ENCODE measurements at regions of chr19 and their contacts with region 1.

Region 1: DNA sequence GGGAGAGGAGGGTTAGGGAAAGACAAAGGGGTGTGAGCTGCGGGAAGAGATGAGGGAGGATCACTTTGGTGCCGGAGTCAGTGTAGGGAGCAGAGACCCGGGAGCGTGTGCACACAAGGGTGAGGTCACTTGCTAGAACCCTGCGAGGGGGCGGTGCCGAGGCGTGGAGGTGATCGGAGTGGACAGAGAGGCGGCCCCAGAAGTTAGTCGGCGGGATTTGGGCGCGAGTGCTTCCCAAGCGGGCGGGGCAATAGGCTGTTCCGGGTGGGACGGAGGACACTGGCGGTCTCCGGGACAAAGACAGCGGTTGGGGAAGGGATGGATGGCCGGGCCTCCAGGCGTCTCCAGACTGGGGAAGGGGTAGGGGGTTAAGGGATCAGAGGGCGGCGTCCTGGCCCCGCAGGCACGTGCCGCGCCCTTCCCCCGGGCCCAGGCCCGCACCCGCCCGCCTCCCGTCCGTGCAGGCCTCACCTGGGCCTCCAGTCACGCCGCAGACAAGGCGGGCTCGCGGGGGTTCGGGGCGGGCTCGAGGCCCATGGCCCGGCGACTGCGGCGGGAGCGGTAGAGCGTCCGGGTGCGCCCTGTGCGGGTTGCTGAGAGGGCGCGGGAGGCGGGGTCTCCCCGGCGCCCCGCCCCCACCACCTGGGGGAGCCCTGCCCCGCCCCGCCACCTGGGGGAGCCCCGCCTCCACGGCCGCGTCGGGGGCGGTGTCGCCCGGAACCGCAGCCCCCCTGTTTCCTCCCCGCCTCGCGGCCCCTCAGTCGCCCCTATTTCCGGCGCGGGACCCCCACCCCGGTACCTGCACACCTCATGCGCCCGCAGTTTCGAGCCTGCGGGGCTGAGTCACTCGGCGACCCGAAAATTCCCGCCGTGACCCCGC is at the start of gene LPAR2:
- DNase-seq: peak; percentile 50 to 66
- H3K4me3 ChIP-seq: peak within 1 kb of the TSS; percentile 38 to 82 (median 65)
- H3K27ac ChIP-seq: peak within 1 kb of the TSS; percentile 88
- H3K4me1 ChIP-seq: no peaks in the 10 kb centered on the region
- H3K27me3 ChIP-seq: no peaks in the 10 kb centered on the region
- CTCF ChIP-seq: no peak
- POLR2A ChIP-seq: no peak
- total RNA-seq, gene LPAR2: 3.2 to 17.1 (median 16.4) TPM

Region 2: DNA sequence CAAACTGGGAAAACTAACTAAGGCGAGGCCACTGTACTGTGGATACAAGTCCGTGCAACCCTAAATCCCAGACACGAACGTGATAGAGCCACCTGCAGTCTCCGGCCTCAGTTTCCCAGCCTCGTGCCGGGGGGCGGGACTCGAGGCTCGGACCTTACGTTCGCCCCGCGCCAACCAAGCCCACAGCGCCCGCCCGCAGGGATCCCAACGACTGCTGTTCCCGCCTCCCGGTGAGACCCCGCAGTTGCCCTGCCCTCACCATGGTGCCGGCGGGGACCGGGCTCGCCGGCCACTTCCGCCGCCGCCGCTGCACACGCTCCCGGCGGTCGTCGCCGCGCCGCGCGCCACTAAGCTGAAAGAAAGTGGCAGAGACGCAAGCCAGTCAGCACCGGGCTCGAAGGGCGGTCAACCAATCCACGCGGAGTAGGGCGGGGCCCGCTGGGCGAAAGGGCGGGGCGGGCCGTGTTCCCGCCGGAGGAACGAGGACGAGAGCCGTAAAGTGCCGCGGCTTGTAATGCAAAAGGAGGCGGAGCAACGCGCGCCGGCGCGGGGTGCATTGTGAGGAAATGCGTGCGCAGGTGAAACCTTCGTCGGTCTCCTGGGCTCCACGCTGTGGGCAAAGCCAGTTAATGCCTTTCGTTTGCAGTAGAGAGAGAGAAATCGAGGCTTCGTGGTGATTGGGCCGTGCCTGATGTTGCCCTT is 1305.0 kb before region 1 on chr19 and contains the start of gene LSM4:
- intact Hi-C with region 1: loop called (anchors 10 kb)
- DNase-seq: peak; percentile 98 to 99
- H3K4me3 ChIP-seq: peak within 1 kb of the TSS; percentile 71 to 90 (median 86)
- H3K27ac ChIP-seq: peak within 1 kb of the TSS; percentile 87 to 96
- H3K4me1 ChIP-seq: no peaks in the 10 kb centered on the region
- H3K27me3 ChIP-seq: no peaks in the 10 kb centered on the region
- CTCF ChIP-seq: peak in 1 of 3 donors; percentile 42
- POLR2A ChIP-seq: peak; percentile 53
- total RNA-seq, gene LSM4: 83.0 to 122 (median 120) TPM